ENCODE measurements at regions of chrX and their contacts with region 1.

Region 1: DNA sequence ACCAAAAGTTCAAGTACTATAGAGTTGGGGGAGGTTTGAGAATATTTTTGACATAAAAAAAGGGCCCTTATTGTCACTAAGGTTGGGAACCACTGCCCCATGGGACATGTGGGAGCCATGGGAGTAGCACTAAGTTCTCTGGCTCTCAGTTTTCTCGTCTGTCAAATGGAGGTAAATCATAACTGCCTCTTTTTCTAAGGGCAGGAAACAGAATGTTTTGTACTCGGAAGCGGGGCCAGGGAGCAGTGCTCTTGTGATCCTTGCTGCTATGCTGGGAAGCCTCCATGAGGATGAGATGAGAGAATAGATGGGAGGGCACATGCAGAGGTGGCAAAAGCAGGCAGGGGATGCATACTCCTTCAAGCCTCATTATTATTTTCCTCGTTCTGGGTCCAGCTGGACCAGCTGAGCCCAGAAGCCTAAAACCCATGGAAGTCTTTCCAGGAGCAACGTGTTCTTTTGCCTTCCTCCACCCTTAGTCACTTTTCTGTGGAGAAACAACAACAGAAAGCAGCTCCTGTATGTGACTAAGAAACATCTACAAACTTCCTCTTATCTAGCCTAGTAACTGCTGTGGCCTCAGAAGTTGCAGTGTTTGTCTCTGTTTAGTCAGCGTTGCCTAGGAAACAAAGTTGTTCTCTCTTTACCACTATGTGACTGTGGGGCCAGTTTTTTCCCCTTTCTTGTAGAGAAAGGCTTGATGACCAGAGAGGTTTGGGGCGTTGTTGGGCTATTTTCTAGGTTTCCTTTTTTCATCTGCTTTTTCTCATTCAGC is 64.8 kb downstream of the TSC22D3 start:
- DNase-seq: no peak
- H3K4me3 ChIP-seq: no peak overlapping the region
- H3K27ac ChIP-seq: peak overlapping the region; percentile 94
- H3K4me1 ChIP-seq: peaks cover 56% of the 10 kb centered on the region
- H3K27me3 ChIP-seq: no peaks in the 10 kb centered on the region
- CTCF ChIP-seq: no peak

Region 2: DNA sequence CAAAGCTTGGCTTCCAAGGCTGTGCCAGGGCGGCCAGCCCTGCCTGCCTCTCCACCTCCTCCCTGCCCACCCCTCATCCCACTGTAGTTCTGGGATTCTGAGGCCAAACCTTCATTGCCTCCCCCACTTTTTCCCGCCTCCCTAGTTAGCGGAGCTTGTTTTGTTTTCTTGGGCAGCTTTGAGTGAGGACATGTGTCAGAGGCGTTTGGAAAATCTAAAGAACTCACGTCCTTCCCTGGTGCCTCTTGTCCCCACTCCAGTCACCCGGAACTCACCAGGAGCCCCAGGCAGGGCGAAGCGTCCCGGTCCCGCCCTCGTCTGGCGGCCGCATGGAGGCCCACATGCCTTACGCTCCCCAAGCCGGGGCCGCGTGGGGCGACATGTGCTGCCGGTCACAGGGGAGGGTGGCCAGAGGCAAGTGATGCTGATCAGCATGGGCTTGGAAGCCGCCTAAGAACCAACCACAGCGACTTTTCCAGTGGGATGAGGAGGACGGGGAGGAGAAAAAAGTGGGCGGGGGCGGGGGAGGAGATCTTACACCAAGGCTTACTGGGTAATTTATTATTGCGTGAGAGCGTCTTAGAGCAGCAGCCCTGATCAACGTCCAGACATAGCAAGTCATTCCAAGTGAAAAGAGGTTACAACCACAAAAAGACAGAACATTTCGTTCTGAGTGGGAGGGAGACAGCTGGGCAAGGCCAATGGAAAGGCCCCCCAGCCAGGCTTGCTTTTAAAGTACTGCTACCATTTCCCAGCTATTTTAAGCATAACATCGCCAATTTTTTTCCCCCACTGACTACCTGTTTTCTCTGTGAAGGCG is 34.0 kb before region 1 on chrX:
- intact Hi-C with region 1: loop called (anchors 5 kb)
- DNase-seq: peak; percentile 84
- H3K4me3 ChIP-seq: peak overlapping the region; percentile 66
- H3K27ac ChIP-seq: peak overlapping the region; percentile 94
- H3K4me1 ChIP-seq: peaks cover 54% of the 10 kb centered on the region
- H3K27me3 ChIP-seq: no peaks in the 10 kb centered on the region
- CTCF ChIP-seq: no peak

Region 3: GRCh38 chrX:107878106-107878505 is 167.3 kb after region 1 on chrX:
- intact Hi-C with region 1: no loop called
- DNase-seq: no peak
- H3K4me3 ChIP-seq: no peak overlapping the region
- H3K27ac ChIP-seq: no peak overlapping the region
- H3K4me1 ChIP-seq: no peaks in the 10 kb centered on the region
- H3K27me3 ChIP-seq: no peaks in the 10 kb centered on the region
- CTCF ChIP-seq: no peak